Activated naive CD8-positive, alpha-beta T cell treated with anti-CD3 and anti-CD28 coated beads, Interleukin-2, amount 10 ng/mL, durations not matched to agents 7 days and 5 days (primary cell): ENCODE measurements at regions of chr1 and their contacts with region 1.

Region 1: GRCh38 chr1:149917571-149918144 is at the start of gene SV2A:
- DNase-seq: peak; percentile 64
- ATAC-seq: peak; percentile 74
- H3K4me3 Mint-ChIP-seq: peak within 1 kb of the TSS; percentile 96
- H3K27ac Mint-ChIP-seq: peak within 1 kb of the TSS; percentile 91
- H3K4me1 Mint-ChIP-seq: peaks cover 42% of the 10 kb centered on the region
- H3K27me3 Mint-ChIP-seq: no peaks in the 10 kb centered on the region
- total RNA-seq, gene SV2A: 23.9 to 27.5 TPM

Region 2: DNA sequence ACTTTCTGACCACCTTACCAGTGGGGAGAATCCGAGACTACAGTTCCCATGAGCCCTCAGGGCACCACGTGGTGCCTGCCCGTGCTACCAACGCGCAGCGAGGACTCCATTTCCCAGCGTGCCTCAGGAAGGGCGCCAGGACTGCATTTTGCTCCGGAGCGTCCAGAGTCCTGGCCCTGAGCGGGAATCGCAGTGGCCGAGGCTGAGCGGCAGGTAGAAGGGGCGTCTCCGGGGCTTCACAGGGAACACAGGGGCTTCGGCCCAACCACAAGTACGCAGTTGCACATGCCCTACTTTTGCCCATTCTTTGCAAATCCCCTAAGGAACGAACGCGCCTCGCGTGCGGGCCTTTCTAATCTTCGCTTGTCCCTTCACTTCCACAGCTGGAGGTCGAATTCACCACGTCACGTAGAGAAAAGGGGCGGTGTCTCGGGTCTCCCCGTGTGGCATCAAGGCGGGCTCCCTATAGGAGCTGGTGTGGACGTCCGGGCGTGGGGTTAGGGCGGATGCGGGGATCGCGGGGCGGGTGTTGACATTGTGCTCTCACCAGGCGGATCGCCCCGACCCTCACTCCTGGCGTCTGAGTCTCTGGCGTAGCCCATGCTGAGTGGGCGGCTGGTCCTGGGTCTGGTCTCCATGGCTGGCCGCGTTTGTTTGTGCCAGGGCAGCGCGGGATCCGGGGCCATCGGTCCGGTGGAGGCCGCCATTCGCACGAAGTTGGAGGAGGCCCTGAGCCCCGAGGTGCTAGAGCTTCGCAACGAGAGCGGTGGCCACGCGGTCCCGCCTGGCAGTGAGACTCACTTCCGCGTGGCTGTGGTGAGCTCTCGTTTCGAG is 18.0 kb before region 1 on chr1 and contains the start of gene BOLA1:
- POLR2A ChIA-PET with region 1: interaction called, 14 read pairs
- DNase-seq: peak; percentile 81
- ATAC-seq: peak; percentile 94
- H3K4me3 Mint-ChIP-seq: peak within 1 kb of the TSS; percentile 89
- H3K27ac Mint-ChIP-seq: peak within 1 kb of the TSS; percentile 92
- H3K4me1 Mint-ChIP-seq: peaks cover 20% of the 10 kb centered on the region
- H3K27me3 Mint-ChIP-seq: no peaks in the 10 kb centered on the region
- total RNA-seq, gene BOLA1: 23.7 to 25.4 TPM

Region 3: DNA sequence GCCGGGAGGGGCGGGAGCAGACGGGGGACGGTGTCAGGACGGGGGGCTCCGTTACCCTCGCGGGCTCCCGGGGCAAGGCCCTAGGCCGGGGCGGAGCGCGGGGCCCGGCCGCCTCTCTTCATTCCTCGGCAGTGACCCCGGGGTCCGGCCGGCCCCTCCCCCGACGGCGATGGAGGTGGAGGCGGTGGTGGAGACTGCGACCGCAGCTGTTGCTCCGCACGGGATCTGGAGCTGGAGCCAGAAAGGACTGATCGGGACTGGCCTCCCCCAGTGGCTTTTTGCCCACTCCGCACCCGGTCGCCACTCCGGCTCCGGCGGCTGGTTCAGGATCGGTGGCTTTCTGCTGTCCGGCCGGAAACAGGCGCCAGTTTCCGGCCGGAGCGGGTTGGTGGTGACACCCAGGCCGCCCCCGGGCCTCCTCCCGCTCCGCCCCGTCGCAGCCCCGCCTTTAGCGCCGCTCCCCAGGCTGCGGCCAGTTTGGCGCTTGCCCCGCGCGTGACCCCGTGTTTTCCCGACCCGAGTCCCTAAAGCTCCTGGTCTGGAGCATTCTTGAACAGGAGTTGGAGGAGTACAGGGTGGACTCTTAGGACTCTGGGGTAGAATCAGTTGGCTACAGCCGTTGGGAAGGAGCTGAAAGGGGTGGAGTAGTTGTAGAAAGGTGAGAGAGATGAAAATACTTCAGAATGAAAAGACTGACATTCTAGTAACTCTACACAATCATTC is 92.9 kb after region 1 on chr1 and contains the start of gene OTUD7B:
- POLR2A ChIA-PET with region 1: no interaction called
- DNase-seq: peak; percentile 85
- ATAC-seq: peak; percentile 81
- H3K4me3 Mint-ChIP-seq: peak within 1 kb of the TSS; percentile 96
- H3K27ac Mint-ChIP-seq: peak within 1 kb of the TSS; percentile 87
- H3K4me1 Mint-ChIP-seq: peaks cover 23% of the 10 kb centered on the region
- H3K27me3 Mint-ChIP-seq: peaks cover 2% of the 10 kb centered on the region
- total RNA-seq, gene OTUD7B: 12.8 to 13.7 TPM